ENCODE measurements at regions of chr3 and their contacts with region 1.

Region 1: GRCh38 chr3:141360888-141361598 is 7.3 kb upstream of the ZBTB38 start:
- DNase-seq: no peak
- ATAC-seq: peak; percentile 84
- H3K4me3 Mint-ChIP-seq: no peak overlapping the region
- H3K27ac Mint-ChIP-seq: no peak overlapping the region
- H3K4me1 Mint-ChIP-seq: peaks cover 5% of the 10 kb centered on the region
- H3K27me3 Mint-ChIP-seq: no peaks in the 10 kb centered on the region
- CTCF ChIP-seq: peak; percentile 77

Region 2: GRCh38 chr3:141218162-141218835 is 142.7 kb before region 1 on chr3:
- CTCF ChIA-PET with region 1: no interaction called
- POLR2A ChIA-PET with region 1: no interaction called
- intact Hi-C with region 1: no loop called
- DNase-seq: no peak
- ATAC-seq: no peak
- H3K4me3 Mint-ChIP-seq: no peak overlapping the region
- H3K27ac Mint-ChIP-seq: no peak overlapping the region
- H3K4me1 Mint-ChIP-seq: no peaks in the 10 kb centered on the region
- H3K27me3 Mint-ChIP-seq: no peaks in the 10 kb centered on the region
- CTCF ChIP-seq: no peak

Region 3: DNA sequence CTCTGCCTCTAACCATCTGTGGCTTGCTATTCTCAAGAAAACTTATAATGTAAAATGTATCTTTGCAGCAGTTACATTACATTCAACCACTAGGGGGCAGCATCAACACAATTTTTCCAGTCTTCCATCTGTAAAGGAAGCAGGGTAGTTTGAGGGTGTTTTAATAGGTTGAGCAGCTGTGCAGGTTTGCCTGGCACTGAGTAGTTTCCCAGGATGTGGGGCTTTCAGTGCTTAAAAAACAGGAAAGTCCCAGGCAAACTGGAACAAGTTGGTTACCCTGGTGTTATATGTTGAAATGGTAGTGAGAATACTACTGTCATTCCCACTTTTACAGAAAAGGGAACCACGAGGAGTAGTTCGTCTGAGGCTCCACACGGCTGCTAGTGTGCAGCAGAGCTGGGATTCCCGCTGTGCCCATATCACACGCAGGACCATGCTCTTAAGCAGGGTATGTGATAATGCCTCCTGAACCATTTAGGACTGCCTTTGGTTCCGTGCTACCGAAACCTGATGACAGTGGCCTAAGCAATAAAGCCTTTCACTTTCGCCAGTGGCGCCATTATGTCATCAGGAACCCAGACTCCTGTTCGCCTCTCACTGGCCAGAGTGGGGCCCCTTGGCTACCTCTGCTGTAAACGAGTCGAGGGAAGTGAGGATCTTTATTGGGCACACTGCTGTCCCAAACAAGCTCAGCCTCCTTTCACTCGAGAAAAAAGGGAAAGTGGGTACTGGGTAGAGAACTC is 57.4 kb before region 1 on chr3:
- CTCF ChIA-PET with region 1: interaction called, 16 read pairs
- POLR2A ChIA-PET with region 1: no interaction called
- intact Hi-C with region 1: no loop called
- DNase-seq: peak; percentile 74
- ATAC-seq: peak; percentile 35
- H3K4me3 Mint-ChIP-seq: no peak overlapping the region
- H3K27ac Mint-ChIP-seq: no peak overlapping the region
- H3K4me1 Mint-ChIP-seq: peaks cover 47% of the 10 kb centered on the region
- H3K27me3 Mint-ChIP-seq: no peaks in the 10 kb centered on the region
- CTCF ChIP-seq: peak; percentile 91

Region 4: DNA sequence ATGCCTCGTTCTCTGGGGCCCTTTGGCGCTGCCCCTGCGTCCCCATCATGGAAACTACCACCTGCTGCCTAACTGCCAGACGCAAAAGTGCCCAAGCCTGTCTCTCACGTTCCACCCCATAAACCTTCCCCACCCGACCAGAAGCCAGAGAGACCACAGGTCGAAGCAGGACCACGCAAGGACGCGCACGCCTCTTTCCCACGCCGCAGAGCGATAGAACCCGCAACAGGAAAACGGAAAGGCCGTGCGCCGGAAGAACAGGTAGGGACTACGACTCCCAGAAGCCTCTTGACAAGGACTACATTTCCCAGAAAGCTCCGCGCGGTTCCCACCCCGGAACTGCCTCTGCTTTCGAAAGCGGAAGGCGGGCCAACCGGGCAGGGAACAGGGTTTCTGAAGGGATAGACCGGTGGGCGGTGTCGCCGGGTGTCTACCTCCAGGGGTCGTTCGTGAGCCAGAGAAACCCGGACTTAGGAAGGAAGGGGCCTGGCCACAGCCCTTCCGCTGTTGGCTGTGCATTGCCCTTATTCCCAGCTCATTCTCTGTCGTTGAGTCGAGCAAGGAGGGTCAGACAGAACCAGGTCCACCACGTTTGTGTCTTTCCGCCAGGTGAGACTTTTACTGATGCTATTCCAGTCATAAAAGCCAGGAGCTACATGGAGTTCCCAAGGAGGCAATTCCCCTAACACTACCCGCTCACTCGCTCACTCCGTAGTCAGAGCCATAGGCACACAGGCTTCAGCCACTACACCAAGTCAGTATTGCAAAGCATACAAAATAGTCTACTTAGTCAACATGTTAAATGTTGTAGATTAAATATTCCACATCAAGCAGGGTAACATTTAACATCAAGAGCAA is 49.3 kb before region 1 on chr3:
- CTCF ChIA-PET with region 1: interaction called, 40 read pairs
- POLR2A ChIA-PET with region 1: no interaction called
- intact Hi-C with region 1: loop called (anchors 5 kb)
- DNase-seq: peak; percentile 99
- ATAC-seq: peak; percentile 94
- H3K4me3 Mint-ChIP-seq: peak overlapping the region; percentile 89
- H3K27ac Mint-ChIP-seq: peak overlapping the region; percentile 99
- H3K4me1 Mint-ChIP-seq: peaks cover 49% of the 10 kb centered on the region
- H3K27me3 Mint-ChIP-seq: no peaks in the 10 kb centered on the region
- CTCF ChIP-seq: peak; percentile 77

Region 5: GRCh38 chr3:141380987-141381386 is 19.9 kb after region 1 on chr3:
- CTCF ChIA-PET with region 1: interaction called, 12 read pairs
- POLR2A ChIA-PET with region 1: no interaction called
- intact Hi-C with region 1: no loop called
- DNase-seq: no peak
- ATAC-seq: no peak
- H3K4me3 Mint-ChIP-seq: no peak overlapping the region
- H3K27ac Mint-ChIP-seq: no peak overlapping the region
- H3K4me1 Mint-ChIP-seq: peaks cover 27% of the 10 kb centered on the region
- H3K27me3 Mint-ChIP-seq: no peaks in the 10 kb centered on the region
- CTCF ChIP-seq: no peak

Region 6: GRCh38 chr3:141431411-141432378 is 70.7 kb after region 1 on chr3:
- CTCF ChIA-PET with region 1: interaction called, 18 read pairs
- POLR2A ChIA-PET with region 1: no interaction called
- intact Hi-C with region 1: no loop called
- DNase-seq: no peak
- ATAC-seq: no peak
- H3K4me3 Mint-ChIP-seq: no peak overlapping the region
- H3K27ac Mint-ChIP-seq: no peak overlapping the region
- H3K4me1 Mint-ChIP-seq: peaks cover 21% of the 10 kb centered on the region
- H3K27me3 Mint-ChIP-seq: no peaks in the 10 kb centered on the region
- CTCF ChIP-seq: no peak

Region 7: GRCh38 chr3:141544697-141545096 is 183.7 kb after region 1 on chr3:
- CTCF ChIA-PET with region 1: no interaction called
- POLR2A ChIA-PET with region 1: no interaction called
- intact Hi-C with region 1: no loop called
- DNase-seq: no peak
- ATAC-seq: peak; percentile 52
- H3K4me3 Mint-ChIP-seq: peak overlapping the region; percentile 18
- H3K27ac Mint-ChIP-seq: peak overlapping the region; percentile 87
- H3K4me1 Mint-ChIP-seq: peaks cover 83% of the 10 kb centered on the region
- H3K27me3 Mint-ChIP-seq: no peaks in the 10 kb centered on the region
- CTCF ChIP-seq: no peak